ENCODE measurements at regions of chr4 and their contacts with region 1.

Region 1: DNA sequence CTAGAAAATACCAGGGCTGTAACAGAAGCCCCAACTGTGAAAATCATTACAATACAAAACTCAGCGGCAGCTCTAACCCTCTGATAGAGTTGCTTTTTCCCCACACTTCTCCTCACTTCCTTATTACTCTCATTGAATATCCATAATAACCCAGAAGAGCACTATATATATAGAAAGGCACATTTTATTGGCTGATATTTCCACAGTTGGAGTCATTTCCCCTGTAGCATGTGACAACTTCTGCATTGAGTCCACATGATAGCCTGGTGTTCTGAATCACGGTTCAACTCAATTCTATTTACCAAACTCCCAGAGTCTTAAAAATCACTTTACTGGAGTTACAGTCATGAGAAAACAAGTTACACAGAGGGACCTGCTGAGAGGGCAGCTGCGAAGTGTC is 46.6 kb upstream of the NWD2 start:
- DNase-seq: peak in 1 of 3 donors; percentile 30
- ATAC-seq: peak; percentile 99
- H3K4me3 ChIP-seq: no peak overlapping the region
- H3K4me1 ChIP-seq: peaks cover 8% of the 10 kb centered on the region
- CTCF ChIP-seq: no peak

Region 2: DNA sequence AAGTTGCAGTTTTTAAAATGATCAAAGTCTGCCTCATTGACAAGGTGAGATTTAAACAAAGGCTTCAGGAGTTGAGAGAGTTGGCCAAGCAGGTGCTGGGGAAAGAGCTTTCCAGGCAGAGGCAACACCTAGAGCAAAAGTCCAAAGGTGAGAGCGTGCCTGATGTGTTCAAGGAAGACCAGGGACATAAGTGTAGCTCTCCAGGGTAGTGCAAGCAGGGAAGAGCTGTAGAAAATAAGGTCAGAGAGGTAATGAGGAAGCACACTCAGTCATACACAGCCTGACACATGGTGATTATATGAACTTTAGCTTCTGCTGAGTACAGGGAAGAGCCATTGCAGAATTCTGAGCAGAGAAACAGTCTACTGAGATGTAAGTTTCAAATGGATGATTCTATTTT is 218.4 kb before region 1 on chr4:
- intact Hi-C with region 1: loop called in 1 of 2 experiments (anchors 5 kb)
- DNase-seq: peak; percentile 50 to 91 (median 53)
- ATAC-seq: peak; percentile 99
- H3K4me3 ChIP-seq: no peak overlapping the region
- H3K4me1 ChIP-seq: no peaks in the 10 kb centered on the region
- CTCF ChIP-seq: no peak

Region 3: GRCh38 chr4:37244583-37245390 is 46.9 kb after region 1 on chr4 and contains the start of gene NWD2:
- intact Hi-C with region 1: no loop called
- DNase-seq: peak; percentile 28 to 52 (median 49)
- ATAC-seq: peak; percentile 77
- H3K4me3 ChIP-seq: no peak within 1 kb of the TSS
- H3K4me1 ChIP-seq: peaks cover 18% of the 10 kb centered on the region
- CTCF ChIP-seq: no peak
- total RNA-seq, gene NWD2: 0.95 to 1.4 (median 1.3) TPM